Activated CD4-positive, alpha-beta memory T cell treated with anti-CD3 and anti-CD28 coated beads, Interleukin-2, amount 10 ng/mL, durations not matched to agents 7 days and 5 days (primary cell): ENCODE measurements at regions of chr19 and their contacts with region 1.

Region 1: DNA sequence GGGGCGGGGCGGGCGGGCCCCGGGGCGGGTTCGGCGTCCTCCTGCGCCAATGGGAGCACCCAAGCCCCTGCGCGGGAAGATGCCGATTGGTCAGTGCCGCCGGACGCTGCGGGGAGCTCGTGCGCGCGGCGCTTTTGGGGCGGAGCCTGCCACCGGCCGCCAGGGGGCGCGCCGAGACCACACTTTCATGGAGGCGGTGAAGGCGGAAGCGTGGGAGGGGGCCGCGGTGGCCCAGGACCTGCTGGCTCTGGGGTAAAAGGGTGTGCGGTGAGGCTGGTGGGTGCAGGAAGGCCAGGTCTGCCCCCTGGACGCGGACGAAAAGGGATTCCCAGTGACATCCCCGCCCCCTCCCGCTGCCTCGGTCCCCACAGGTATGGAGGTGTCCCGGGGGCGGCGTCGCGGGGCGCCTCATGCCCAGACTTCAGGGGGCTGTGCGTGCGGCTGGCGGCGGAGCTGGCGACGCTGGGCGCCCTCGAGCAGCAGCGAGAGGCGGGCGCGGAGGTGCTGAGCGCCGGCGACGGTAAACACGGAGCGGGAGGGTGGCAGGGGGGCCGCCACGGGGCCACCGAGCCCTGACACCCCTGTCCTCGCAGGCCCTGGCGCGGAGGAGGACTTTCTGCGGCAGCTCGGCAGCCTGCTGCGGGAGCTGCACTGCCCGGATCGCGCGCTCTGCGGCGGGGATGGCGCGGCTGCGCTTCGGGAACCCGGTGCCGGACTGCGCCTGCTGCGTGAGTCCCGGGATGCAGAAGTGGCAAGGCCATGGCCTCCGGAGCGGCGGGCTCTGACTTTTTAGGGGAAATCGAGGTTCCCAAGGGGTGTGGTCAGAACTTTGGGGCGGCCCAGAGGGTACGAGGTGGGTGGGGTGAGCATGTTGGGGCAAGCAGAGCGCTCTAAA is at the start of gene FAM98C:
- DNase-seq: peak; percentile 98
- H3K4me3 Mint-ChIP-seq: peak within 1 kb of the TSS; percentile 93
- H3K27ac Mint-ChIP-seq: peak within 1 kb of the TSS; percentile 92
- H3K4me1 Mint-ChIP-seq: peaks cover 26% of the 10 kb centered on the region
- H3K27me3 Mint-ChIP-seq: peaks cover 6% of the 10 kb centered on the region
- total RNA-seq, gene FAM98C: 34.7 to 36.5 TPM

Region 2: GRCh38 chr19:38387550-38388348 is 15.5 kb before region 1 on chr19 and contains the start of gene GGN:
- CTCF ChIA-PET with region 1: interaction called, 20 read pairs
- POLR2A ChIA-PET with region 1: interaction called, 17 read pairs
- DNase-seq: peak; percentile 83
- H3K4me3 Mint-ChIP-seq: peak within 1 kb of the TSS; percentile 82
- H3K27ac Mint-ChIP-seq: peak within 1 kb of the TSS; percentile 66
- H3K4me1 Mint-ChIP-seq: peaks cover 33% of the 10 kb centered on the region
- H3K27me3 Mint-ChIP-seq: peaks cover 30% of the 10 kb centered on the region
- total RNA-seq, gene GGN: 0.28 to 0.40 TPM

Region 3: GRCh38 chr19:38440592-38440991 is 37.4 kb after region 1 on chr19:
- CTCF ChIA-PET with region 1: interaction called, 10 read pairs
- POLR2A ChIA-PET with region 1: interaction called, 3 read pairs
- DNase-seq: no peak
- H3K4me3 Mint-ChIP-seq: no peak overlapping the region
- H3K27ac Mint-ChIP-seq: no peak overlapping the region
- H3K4me1 Mint-ChIP-seq: peaks cover 7% of the 10 kb centered on the region
- H3K27me3 Mint-ChIP-seq: no peaks in the 10 kb centered on the region

Region 4: GRCh38 chr19:38485541-38486285 is 82.5 kb after region 1 on chr19:
- CTCF ChIA-PET with region 1: no interaction called
- POLR2A ChIA-PET with region 1: no interaction called
- DNase-seq: no peak
- H3K4me3 Mint-ChIP-seq: no peak overlapping the region
- H3K27ac Mint-ChIP-seq: no peak overlapping the region
- H3K4me1 Mint-ChIP-seq: no peaks in the 10 kb centered on the region
- H3K27me3 Mint-ChIP-seq: peaks cover 9% of the 10 kb centered on the region

Region 5: DNA sequence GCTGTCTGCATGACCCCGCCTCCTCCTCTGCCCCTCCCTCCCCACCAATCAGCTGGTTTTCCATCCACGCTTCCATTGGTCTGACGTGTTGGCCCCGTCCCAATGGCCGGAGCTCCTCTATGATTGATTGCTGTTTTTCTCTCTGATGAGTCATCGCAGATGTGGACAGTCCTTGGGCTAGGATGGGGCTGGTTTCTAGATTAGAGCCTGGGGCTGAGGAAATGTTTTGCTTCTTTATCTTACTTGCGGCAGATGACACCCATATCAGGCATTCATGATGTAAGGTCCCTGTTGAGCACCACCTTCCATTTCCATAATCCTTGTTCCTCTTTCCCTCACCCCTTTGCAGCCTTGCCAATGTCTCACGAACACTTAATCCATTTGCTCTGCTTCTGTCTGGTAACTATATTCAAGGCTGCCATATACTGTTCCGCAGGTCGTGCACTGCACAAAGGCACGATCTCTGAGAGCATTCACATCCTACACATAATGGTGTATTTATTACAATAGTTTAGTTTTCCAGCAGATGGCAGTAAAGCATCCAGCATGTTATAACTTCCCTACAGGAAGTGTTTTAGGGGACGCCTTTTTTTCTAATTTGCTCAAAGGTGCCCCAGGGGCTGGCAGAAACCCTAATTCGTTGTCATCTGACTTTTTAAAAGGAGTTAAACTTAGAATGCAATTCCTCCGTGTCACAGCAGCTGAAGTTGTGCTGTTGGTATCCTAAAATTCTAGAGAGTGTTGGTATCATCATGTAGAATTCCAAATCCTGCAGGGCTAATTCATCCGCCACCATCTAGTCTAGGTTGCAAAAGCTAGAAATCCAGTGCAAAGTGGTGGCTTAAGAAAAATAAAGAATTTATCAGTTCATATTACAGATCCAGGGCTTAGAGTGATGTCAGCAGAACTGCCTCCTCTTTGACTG is 141.1 kb after region 1 on chr19:
- CTCF ChIA-PET with region 1: interaction called, 12 read pairs
- POLR2A ChIA-PET with region 1: interaction called, 3 read pairs
- DNase-seq: peak; percentile 49
- H3K4me3 Mint-ChIP-seq: peak overlapping the region; percentile 50
- H3K27ac Mint-ChIP-seq: peak overlapping the region; percentile 75
- H3K4me1 Mint-ChIP-seq: peaks cover 38% of the 10 kb centered on the region
- H3K27me3 Mint-ChIP-seq: no peaks in the 10 kb centered on the region

Region 6: DNA sequence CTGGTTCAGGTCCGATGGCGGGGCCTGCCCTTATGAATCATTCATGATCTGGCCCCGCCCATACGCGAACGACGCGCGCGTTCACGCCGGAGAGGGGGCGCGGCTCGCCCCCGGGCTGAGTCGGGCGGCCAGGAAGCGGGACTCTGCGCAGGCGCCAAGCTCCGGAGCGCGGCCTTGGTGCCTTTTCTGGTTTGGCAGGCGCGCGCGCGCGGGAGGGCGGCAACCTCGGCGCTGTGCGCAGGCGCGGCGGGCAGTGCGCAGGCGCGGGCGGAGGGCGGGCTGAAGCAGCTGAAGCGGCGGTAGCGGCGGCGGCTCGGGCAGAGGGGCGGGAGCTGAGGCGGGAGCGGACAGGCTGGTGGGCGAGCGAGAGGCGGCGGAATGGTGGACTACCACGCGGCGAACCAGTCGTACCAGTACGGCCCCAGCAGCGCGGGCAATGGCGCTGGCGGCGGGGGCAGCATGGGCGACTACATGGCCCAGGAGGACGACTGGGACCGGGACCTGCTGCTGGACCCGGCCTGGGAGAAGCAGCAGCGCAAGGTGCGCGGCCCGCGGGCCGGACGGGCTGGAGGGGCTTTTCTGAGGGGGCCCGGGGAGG is 244.3 kb after region 1 on chr19 and contains the start of gene ACTN4:
- CTCF ChIA-PET with region 1: interaction called, 11 read pairs
- POLR2A ChIA-PET with region 1: interaction called, 5 read pairs
- DNase-seq: peak; percentile 100
- H3K4me3 Mint-ChIP-seq: peak within 1 kb of the TSS; percentile 89
- H3K27ac Mint-ChIP-seq: peak within 1 kb of the TSS; percentile 80
- H3K4me1 Mint-ChIP-seq: peaks cover 45% of the 10 kb centered on the region
- H3K27me3 Mint-ChIP-seq: no peaks in the 10 kb centered on the region
- total RNA-seq, gene ACTN4: 532 to 534 TPM

Region 7: GRCh38 chr19:38929929-38930775 is 526.9 kb after region 1 on chr19 and contains the start of gene SARS2:
- CTCF ChIA-PET with region 1: interaction called, 57 read pairs
- POLR2A ChIA-PET with region 1: interaction called, 17 read pairs
- DNase-seq: peak; percentile 94
- H3K4me3 Mint-ChIP-seq: peak within 1 kb of the TSS; percentile 93
- H3K27ac Mint-ChIP-seq: peak within 1 kb of the TSS; percentile 92
- H3K4me1 Mint-ChIP-seq: peaks cover 55% of the 10 kb centered on the region
- H3K27me3 Mint-ChIP-seq: no peaks in the 10 kb centered on the region
- total RNA-seq, gene SARS2: 28.4 to 32.7 TPM